Head of caudate nucleus (tissue), 42 donors: ENCODE measurements at regions of chr18 and their contacts with region 1.

Region 1: DNA sequence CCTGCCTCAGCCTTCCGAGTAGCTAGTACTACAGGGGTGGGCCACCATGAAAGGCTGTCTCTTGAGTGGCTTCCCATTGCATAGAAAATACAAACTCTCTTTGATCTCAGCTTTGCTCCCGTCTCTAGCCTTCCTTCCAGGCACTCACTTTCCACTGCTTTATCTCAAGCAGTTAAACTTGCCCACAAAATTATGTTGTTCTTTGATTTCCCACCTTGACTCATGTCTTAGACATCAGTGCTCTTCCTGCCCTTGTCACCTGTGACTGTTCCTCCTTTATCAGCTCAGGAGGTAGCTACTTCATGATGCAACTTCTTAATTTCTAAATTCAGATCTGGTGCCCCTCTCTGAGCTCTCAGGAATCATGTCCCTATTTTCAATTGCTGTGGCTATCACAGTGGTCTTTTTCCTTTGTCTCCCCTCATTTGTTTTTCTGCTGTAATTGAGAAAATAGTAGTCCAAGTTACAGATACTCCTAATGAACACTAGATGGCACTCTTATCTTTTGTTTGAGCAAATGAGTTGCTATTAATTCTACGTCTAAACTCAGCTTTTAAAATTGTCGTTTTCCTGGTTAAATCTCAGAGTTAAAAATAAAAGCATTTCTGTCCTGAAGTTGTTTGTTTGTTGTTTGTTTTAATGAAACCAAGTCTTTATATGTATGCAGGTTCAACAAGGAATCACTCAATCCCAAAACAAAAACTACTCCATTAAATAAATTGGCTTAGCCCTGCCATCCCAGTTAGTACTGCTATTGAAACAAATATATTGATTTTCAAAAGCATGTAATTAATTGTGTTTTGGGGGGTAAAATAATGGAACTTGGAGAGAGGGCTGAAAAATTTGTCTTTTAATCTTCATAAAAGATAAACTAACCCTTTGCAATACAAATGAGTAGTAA is 46.9 kb upstream of the GREB1L start:
- DNase-seq: no peak

Region 2: DNA sequence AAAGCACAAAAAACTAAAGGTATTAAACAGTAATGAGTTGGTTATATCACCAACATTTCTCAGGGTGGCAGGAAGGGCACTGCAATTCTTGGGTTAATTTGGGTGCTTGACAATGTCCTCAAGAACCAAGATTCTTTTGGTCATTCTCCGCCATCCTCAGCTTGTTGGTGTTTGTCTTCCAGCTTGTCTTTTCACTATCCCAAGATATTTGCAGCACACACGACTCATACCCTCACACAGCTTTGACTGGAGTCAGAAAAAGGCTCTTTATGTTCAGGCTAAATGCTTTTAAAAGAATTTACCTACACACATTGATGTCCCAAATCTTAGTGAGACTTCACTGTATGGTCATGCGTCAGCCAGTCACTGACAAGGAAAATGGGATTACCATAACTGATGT is 59.5 kb after region 1 on chr18:
- intact Hi-C with region 1: no loop called
- DNase-seq: no peak

Region 3: DNA sequence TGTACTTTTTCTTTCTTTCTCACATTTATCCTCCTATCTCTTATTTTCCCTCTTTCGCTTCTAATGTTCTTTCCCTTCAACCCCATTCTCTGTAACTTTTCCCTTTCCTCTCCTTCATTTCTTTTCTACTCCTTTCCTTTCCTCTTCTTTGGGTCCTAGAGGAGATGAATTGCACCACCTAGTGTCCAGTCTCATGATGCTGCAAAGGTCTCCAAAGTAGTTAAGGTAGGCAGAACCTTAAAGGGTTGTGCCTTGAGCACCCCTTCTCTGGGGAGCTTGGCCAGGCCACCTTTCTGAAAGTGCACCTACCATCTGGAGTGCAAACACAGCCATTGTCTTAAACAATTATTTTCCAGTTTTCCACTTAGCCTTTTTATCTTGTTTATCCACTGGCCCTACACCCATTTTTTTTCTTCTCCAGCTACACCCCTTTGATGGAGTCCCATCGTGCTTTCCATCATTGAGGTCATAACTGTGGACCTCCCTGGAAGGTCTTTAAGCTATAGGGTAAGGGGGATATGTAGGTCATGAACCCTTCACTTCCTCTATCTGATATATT is 249.4 kb after region 1 on chr18:
- intact Hi-C with region 1: loop called (anchors 5 kb)
- DNase-seq: peak in 27 of 42 donors; percentile 9 to 80 (median 48)

Region 4: GRCh38 chr18:21955757-21956652 is 760.9 kb after region 1 on chr18:
- intact Hi-C with region 1: loop called (anchors 10 kb)
- DNase-seq: peak; percentile 31 to 92 (median 80)